Activated CD4-positive, alpha-beta T cell treated with anti-CD3 and anti-CD28 coated beads for 36 hours (primary cell): ENCODE measurements at regions of chr15 and their contacts with region 1.

Region 1: GRCh38 chr15:74906446-74907162 is at the start of gene FAM219B:
- DNase-seq: peak; percentile 88
- ATAC-seq: peak; percentile 88
- H3K4me3 Mint-ChIP-seq: peak within 1 kb of the TSS; percentile 92
- H3K27ac Mint-ChIP-seq: peak within 1 kb of the TSS; percentile 94
- H3K4me1 Mint-ChIP-seq: peaks cover 37% of the 10 kb centered on the region
- H3K27me3 Mint-ChIP-seq: no peaks in the 10 kb centered on the region
- total RNA-seq, gene FAM219B: 39.3 to 49.7 TPM

Region 2: GRCh38 chr15:74635228-74635627 is 271.4 kb before region 1 on chr15:
- CTCF ChIA-PET with region 1: interaction called, 5 read pairs
- POLR2A ChIA-PET with region 1: no interaction called
- intact Hi-C with region 1: loop called in 1 of 2 experiments (anchors 5 kb)
- DNase-seq: peak; percentile 87
- ATAC-seq: peak; percentile 90
- H3K4me3 Mint-ChIP-seq: no peak overlapping the region
- H3K27ac Mint-ChIP-seq: no peak overlapping the region
- H3K4me1 Mint-ChIP-seq: no peaks in the 10 kb centered on the region
- H3K27me3 Mint-ChIP-seq: no peaks in the 10 kb centered on the region

Region 3: DNA sequence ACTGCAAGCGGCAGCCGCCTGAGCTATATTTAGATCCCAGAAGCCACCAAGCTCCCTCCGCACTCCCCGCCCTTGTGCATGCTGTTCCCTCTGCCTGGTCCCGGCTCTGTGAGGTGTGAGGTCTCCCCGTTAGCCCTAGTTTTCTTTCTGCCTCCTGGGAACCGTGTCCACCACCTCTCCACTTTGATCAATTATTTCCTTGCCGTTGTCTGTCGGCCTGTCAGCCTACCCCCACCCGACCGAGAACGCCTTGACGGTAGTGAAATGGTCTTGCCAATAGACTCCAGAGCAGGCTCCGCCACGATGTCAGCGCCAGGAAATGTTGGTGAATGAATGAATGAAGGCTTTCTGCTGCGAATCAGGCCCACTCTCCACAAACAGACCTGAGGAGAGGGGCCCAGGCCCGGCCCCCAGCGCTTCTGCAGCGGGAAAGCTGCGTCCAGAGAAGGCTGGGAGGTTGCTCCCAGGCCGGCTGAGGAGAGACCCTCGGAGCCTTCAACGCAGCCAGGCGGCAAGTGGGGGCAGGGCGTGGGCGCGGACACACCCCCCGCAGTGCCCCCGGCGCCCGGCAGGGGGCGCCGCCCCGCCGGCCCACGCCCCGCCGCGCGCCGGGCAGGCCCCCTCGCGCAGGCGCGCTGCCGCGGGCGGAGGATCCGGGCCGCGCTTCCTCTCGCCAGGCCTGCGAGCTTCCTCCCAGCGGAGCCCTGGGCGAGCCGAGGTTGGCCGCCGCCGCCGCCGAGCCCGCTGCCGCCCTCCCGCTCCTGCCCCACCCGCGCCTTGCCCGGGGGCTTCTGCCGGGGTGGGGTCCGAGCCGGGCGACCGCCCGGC is 125.0 kb before region 1 on chr15 and contains the start of gene CSK:
- CTCF ChIA-PET with region 1: interaction called, 27 read pairs
- POLR2A ChIA-PET with region 1: interaction called, 3 read pairs
- intact Hi-C with region 1: no loop called
- DNase-seq: peak; percentile 84
- ATAC-seq: peak; percentile 27
- H3K4me3 Mint-ChIP-seq: peak within 1 kb of the TSS; percentile 89
- H3K27ac Mint-ChIP-seq: peak within 1 kb of the TSS; percentile 100
- H3K4me1 Mint-ChIP-seq: peaks cover 56% of the 10 kb centered on the region
- H3K27me3 Mint-ChIP-seq: no peaks in the 10 kb centered on the region
- total RNA-seq, gene CSK: 229 to 272 TPM

Region 4: GRCh38 chr15:74835307-74835823 is 71.2 kb before region 1 on chr15:
- CTCF ChIA-PET with region 1: interaction called, 13 read pairs
- POLR2A ChIA-PET with region 1: no interaction called
- intact Hi-C with region 1: no loop called
- DNase-seq: peak; percentile 72
- ATAC-seq: peak; percentile 75
- H3K4me3 Mint-ChIP-seq: no peak overlapping the region
- H3K27ac Mint-ChIP-seq: no peak overlapping the region
- H3K4me1 Mint-ChIP-seq: peaks cover 1% of the 10 kb centered on the region
- H3K27me3 Mint-ChIP-seq: no peaks in the 10 kb centered on the region

Region 5: GRCh38 chr15:74857712-74858368 is 48.8 kb before region 1 on chr15:
- CTCF ChIA-PET with region 1: interaction called, 11 read pairs
- POLR2A ChIA-PET with region 1: no interaction called
- intact Hi-C with region 1: no loop called
- DNase-seq: no peak
- ATAC-seq: peak; percentile 86
- H3K4me3 Mint-ChIP-seq: no peak overlapping the region
- H3K27ac Mint-ChIP-seq: peak overlapping the region; percentile 85
- H3K4me1 Mint-ChIP-seq: peaks cover 34% of the 10 kb centered on the region
- H3K27me3 Mint-ChIP-seq: no peaks in the 10 kb centered on the region

Region 6: DNA sequence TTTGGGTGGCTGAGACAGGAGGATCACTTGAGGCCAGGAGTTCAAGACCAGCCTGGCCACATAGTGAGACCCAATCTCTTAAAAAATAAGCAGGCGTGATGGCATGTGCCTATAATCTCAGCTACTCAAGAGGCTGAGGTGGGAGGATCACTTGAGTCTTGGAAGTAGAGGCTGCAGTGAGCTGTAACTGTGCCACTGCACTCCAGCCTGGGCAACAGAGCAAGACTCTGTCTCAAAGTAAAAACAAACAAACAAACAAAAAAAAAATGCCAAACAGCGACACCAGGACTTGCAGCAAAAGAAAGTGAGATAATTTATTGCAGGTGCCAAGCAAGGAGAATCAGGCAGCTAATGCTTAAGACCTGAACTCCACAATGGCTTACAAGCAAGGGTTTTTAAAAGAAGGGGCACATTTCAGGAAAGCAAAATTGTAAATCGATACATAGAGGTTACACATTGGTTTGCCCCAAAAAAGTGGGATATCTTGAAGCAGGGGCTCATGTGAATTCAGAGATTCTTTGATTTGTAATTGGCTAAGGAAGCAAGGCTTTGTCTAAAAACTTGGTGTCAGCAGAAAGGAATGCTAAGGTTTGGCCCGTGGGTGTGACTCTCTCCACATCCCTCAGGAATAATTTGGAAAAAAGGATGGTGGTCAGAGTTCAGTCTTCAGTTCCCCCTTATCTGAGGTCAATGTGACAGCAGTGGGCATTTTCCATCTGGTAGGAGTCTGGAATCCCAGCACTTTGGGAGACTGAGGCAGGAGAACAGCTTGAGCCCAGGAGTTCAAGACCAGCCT is 22.0 kb before region 1 on chr15:
- CTCF ChIA-PET with region 1: interaction called, 22 read pairs
- POLR2A ChIA-PET with region 1: interaction called, 6 read pairs
- intact Hi-C with region 1: no loop called
- DNase-seq: no peak
- ATAC-seq: no peak
- H3K4me3 Mint-ChIP-seq: no peak overlapping the region
- H3K27ac Mint-ChIP-seq: no peak overlapping the region
- H3K4me1 Mint-ChIP-seq: peaks cover 10% of the 10 kb centered on the region
- H3K27me3 Mint-ChIP-seq: no peaks in the 10 kb centered on the region

Region 7: DNA sequence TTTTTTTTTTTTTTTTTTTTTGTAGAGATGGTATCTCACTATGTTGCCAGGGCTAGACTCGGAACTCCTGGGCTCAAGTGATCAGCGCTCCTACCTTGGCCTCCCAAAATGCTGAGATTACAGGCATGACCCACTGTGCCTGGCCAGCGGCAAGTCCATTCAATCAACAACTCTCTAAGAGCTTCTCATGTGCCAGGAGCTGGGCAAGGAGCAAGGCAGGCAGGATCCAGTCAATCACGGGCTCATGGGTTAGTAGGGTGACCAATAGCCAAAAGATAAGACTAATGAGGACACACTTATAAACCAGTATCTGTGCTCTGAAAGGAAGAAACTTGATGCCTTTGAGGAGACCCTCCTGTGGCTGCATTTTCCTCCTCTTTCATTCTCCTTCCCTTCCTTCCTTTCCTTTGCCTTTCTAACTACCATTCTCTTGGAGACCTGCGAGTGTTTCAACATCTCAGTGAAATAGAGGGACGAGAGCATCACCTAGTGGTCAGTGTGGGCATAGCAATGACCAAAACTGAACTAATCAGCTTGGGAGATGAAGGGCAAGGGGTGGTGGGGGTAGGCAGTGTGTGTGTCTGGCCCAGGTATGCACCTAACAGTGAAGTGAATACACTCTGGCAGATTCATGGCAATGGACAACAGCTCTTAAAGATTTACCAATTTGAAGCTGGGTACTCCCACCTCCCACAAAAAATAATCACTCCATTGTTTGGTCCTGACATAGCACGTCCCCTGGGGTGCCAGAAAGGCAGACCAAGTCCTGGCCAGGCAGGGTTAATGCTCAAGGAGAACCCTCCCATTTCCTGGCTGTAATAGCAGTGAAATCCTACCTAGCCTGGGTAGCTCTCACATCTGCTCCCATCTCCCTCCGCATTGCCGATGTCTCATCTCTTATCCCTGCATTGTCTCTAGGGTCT is 43.7 kb after region 1 on chr15:
- CTCF ChIA-PET with region 1: interaction called, 11 read pairs
- POLR2A ChIA-PET with region 1: no interaction called
- intact Hi-C with region 1: loop called in 1 of 2 experiments (anchors 1 kb)
- DNase-seq: peak; percentile 87
- ATAC-seq: peak; percentile 87
- H3K4me3 Mint-ChIP-seq: no peak overlapping the region
- H3K27ac Mint-ChIP-seq: no peak overlapping the region
- H3K4me1 Mint-ChIP-seq: peaks cover 7% of the 10 kb centered on the region
- H3K27me3 Mint-ChIP-seq: no peaks in the 10 kb centered on the region